Panc1 (cell line): ENCODE measurements at regions of chr22 and their contacts with region 1.

Region 1: GRCh38 chr22:44838316-44839016 is 86.1 kb downstream of the ARHGAP8 start:
- DNase-seq: no peak
- ATAC-seq: no peak
- H3K4me3 ChIP-seq: no peak overlapping the region
- H3K27ac ChIP-seq: no peak overlapping the region
- H3K4me1 ChIP-seq: no peaks in the 10 kb centered on the region
- H3K27me3 ChIP-seq: no peaks in the 10 kb centered on the region
- CTCF ChIP-seq: no peak

Region 2: GRCh38 chr22:44752285-44753188 is 85.9 kb before region 1 on chr22 and contains the start of gene ARHGAP8:
- CTCF ChIA-PET with region 1: interaction called, 16 read pairs
- POLR2A ChIA-PET with region 1: no interaction called
- in situ Hi-C with region 1: no loop called
- intact Hi-C with region 1: no loop called
- DNase-seq: no peak
- ATAC-seq: peak; percentile 59
- H3K4me3 ChIP-seq: peak within 1 kb of the TSS; percentile 45 to 46
- H3K27ac ChIP-seq: peak within 1 kb of the TSS; percentile 57
- H3K4me1 ChIP-seq: peaks cover 13% of the 10 kb centered on the region
- H3K27me3 ChIP-seq: no peaks in the 10 kb centered on the region
- CTCF ChIP-seq: no peak
- total RNA-seq, gene ARHGAP8: 9.2 TPM

Region 3: GRCh38 chr22:44819971-44820631 is 18.4 kb before region 1 on chr22:
- CTCF ChIA-PET with region 1: interaction called, 10 read pairs
- POLR2A ChIA-PET with region 1: no interaction called
- in situ Hi-C with region 1: no loop called
- intact Hi-C with region 1: no loop called
- DNase-seq: no peak
- ATAC-seq: peak; percentile 26
- H3K4me3 ChIP-seq: no peak overlapping the region
- H3K27ac ChIP-seq: no peak overlapping the region
- H3K4me1 ChIP-seq: no peaks in the 10 kb centered on the region
- H3K27me3 ChIP-seq: no peaks in the 10 kb centered on the region
- CTCF ChIP-seq: no peak

Region 4: GRCh38 chr22:45246060-45246985 is 407.9 kb after region 1 on chr22:
- CTCF ChIA-PET with region 1: no interaction called
- POLR2A ChIA-PET with region 1: no interaction called
- in situ Hi-C with region 1: no loop called
- intact Hi-C with region 1: no loop called
- DNase-seq: peak; percentile 71
- ATAC-seq: peak; percentile 86
- H3K4me3 ChIP-seq: no peak overlapping the region
- H3K27ac ChIP-seq: no peak overlapping the region; the same call in 1 of the 2 replicates
- H3K4me1 ChIP-seq: peaks cover 9% of the 10 kb centered on the region
- H3K27me3 ChIP-seq: no peaks in the 10 kb centered on the region
- CTCF ChIP-seq: no peak